ENCODE measurements at regions of chr1 and their contacts with region 1.

Region 1: DNA sequence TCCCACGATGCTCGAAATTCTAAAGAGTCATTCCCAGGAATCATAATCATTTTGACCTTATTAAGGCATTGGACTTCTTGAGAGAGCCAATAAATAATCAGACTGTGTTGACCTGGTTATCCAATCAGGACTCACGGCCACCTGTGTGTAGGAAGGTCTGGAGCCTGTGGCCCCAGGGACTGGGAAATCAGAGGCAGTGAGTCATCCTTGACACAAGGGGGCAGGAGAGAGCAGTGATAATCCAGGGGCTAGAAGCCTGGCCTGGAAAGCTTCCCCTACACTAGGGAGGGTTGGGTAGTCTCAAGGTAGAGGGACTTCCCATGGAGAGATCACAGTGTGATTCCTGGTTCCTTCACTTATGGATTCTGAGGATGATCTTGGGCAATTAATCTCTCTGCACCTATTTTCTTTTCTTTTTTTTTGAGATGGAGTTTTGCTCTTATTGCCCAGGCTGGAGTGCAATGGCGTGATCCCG is 4.7 kb downstream of the MR1 start:
- DNase-seq: no peak
- H3K4me3 ChIP-seq: no peak overlapping the region
- H3K27ac ChIP-seq: peak overlapping the region in 1 of 4 donors; percentile 16
- H3K4me1 ChIP-seq: peaks cover 31 to 80% (median 32%) of the 10 kb centered on the region in 3 donors
- H3K27me3 ChIP-seq: no peaks in the 10 kb centered on the region
- CTCF ChIP-seq: peak; percentile 38 to 79 (median 72)
- POLR2A ChIP-seq: no peak

Region 2: DNA sequence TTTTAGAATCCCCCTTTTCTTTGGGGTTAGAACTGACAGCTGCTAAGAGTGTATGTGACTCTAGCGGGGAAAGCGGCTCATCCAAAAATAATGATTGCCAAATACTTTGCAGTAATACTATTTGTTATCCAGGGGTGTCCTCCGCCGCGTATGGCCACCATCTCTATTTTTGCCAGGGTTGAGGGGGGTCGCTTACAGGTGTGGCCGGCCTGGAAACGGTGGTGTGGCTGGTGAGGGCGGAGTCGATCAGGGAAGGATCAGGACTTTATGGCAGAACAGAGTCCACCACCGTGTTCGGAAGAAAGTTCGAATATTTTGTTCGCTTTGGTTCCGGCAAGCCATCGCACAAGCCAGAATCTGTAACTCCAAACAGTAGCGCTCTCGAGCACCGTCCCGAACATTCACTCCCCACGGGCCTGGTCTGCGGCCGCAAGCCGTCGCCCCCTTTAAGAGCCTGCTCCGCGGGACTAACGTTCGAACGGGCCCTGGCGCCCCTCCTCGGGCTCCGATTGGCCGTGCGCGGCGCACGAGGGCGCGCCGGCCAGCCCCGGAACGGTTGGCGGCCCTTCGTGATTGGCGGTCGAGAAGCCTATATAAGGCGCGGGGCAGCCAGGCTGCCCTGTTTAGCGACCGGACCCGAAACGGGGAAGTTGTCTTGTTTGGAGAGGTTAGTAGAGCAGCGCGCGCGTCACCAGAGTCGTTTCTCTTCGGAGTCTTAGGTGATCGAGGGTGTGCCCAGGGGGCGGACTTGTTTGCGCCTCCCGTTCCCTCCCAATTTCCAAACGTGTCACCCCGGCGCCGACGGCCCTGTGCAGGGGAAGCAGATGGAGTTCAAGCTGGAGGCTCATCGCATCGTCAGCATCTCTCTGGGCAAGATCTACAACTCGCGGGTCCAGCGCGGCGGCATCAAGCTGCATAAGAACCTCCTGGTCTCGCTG is 49.9 kb after region 1 on chr1 and contains the start of gene IER5:
- intact Hi-C with region 1: loop called (anchors 5 kb)
- DNase-seq: peak; percentile 91
- H3K4me3 ChIP-seq: peak within 1 kb of the TSS; percentile 72 to 97 (median 84)
- H3K27ac ChIP-seq: peak within 1 kb of the TSS; percentile 92 to 98 (median 96)
- H3K4me1 ChIP-seq: peaks cover 17 to 58% (median 17%) of the 10 kb centered on the region in 3 donors
- H3K27me3 ChIP-seq: no peaks in the 10 kb centered on the region
- CTCF ChIP-seq: peak in 1 of 6 experiments; percentile 16
- POLR2A ChIP-seq: peak in 3 of 4 donors; percentile 93 to 100 (median 99)
- total RNA-seq, gene IER5: 21.6 to 40.6 (median 26.5) TPM

Region 3: GRCh38 chr1:181142096-181142958 is 103.9 kb after region 1 on chr1:
- intact Hi-C with region 1: loop called (anchors 5 kb)
- DNase-seq: no peak
- H3K4me3 ChIP-seq: peak overlapping the region in 3 of 4 donors; percentile 24 to 56 (median 33)
- H3K27ac ChIP-seq: peak overlapping the region; percentile 40 to 66 (median 48)
- H3K4me1 ChIP-seq: peaks cover 23 to 45% (median 25%) of the 10 kb centered on the region in 3 donors
- H3K27me3 ChIP-seq: no peaks in the 10 kb centered on the region
- CTCF ChIP-seq: peak; percentile 93 to 99 (median 98)
- POLR2A ChIP-seq: no peak

Region 4: DNA sequence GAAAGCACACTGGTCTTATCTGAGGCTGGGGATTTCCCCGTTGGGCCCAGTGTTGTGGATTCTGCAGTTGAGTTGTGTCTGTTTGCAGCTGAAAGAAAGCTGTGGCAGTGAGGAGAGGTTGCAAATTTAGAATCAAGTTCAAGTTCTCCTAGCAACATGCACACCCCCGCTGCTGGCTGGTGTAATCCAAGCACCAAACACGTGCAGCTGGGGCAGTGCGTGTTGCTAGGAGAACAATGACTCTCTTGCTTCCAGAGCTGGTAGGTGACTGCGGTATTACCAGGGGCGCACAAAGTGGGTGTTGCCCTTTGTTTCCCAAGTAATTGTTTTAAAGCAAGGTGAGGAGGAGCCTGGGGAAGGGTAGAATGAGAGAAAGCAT is 141.5 kb after region 1 on chr1:
- intact Hi-C with region 1: no loop called
- DNase-seq: no peak
- H3K4me3 ChIP-seq: no peak overlapping the region
- H3K27ac ChIP-seq: no peak overlapping the region
- H3K4me1 ChIP-seq: peaks cover 0 to 13% (median 3%) of the 10 kb centered on the region in 3 donors
- H3K27me3 ChIP-seq: peaks cover 0 to 27% (median 0%) of the 10 kb centered on the region in 4 donors
- CTCF ChIP-seq: no peak
- POLR2A ChIP-seq: no peak